BJ (cell line): ENCODE measurements at regions of chr1 and their contacts with region 1.

Region 1: GRCh38 chr1:26961826-26962225 is 1.6 kb upstream of the KDF1 start:
- DNase-seq: peak; percentile 72
- H3K4me3 ChIP-seq: no peak overlapping the region
- H3K27me3 ChIP-seq: peaks cover 14% of the 10 kb centered on the region
- CTCF ChIP-seq: no peak

Region 2: GRCh38 chr1:26838474-26839338 is 123.1 kb before region 1 on chr1:
- CTCF ChIA-PET with region 1: no interaction called
- POLR2A ChIA-PET with region 1: no interaction called
- DNase-seq: no peak
- H3K4me3 ChIP-seq: no peak overlapping the region
- H3K27me3 ChIP-seq: no peaks in the 10 kb centered on the region
- CTCF ChIP-seq: no peak

Region 3: GRCh38 chr1:26932531-26932930 is 29.3 kb before region 1 on chr1:
- CTCF ChIA-PET with region 1: no interaction called
- POLR2A ChIA-PET with region 1: no interaction called
- DNase-seq: no peak
- H3K4me3 ChIP-seq: no peak overlapping the region
- H3K27me3 ChIP-seq: no peaks in the 10 kb centered on the region
- CTCF ChIP-seq: no peak

Region 4: GRCh38 chr1:26976621-26977510 is 15.0 kb after region 1 on chr1:
- CTCF ChIA-PET with region 1: interaction called, 14 read pairs
- POLR2A ChIA-PET with region 1: interaction called, 3 read pairs
- DNase-seq: no peak
- H3K4me3 ChIP-seq: no peak overlapping the region
- H3K27me3 ChIP-seq: no peaks in the 10 kb centered on the region
- CTCF ChIP-seq: no peak

Region 5: DNA sequence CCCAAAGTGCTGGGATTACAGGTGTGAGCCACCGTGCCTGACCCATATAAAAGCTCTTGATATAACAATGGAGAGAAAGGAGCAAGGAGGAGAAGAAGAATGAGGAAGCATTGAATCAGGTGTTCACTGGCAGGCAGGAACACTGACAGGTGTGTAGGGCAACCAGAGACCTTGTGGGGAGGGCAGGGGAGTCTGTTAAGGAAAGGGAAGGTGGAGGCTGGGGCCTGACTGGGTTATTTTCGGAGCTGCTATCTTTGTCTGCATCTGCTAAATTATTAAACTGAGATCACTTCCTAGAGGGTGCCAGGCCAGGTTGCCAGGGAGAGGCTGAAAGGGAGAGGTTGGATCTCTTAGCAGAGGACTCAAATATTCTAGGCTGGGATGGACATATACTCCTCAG is 24.8 kb after region 1 on chr1:
- CTCF ChIA-PET with region 1: interaction called, 27 read pairs
- POLR2A ChIA-PET with region 1: no interaction called
- DNase-seq: no peak
- H3K4me3 ChIP-seq: no peak overlapping the region
- H3K27me3 ChIP-seq: 0 out of 2 replicates have a peak, but pooled peaks cover 2% of the 10 kb centered on the region
- CTCF ChIP-seq: no peak

Region 6: DNA sequence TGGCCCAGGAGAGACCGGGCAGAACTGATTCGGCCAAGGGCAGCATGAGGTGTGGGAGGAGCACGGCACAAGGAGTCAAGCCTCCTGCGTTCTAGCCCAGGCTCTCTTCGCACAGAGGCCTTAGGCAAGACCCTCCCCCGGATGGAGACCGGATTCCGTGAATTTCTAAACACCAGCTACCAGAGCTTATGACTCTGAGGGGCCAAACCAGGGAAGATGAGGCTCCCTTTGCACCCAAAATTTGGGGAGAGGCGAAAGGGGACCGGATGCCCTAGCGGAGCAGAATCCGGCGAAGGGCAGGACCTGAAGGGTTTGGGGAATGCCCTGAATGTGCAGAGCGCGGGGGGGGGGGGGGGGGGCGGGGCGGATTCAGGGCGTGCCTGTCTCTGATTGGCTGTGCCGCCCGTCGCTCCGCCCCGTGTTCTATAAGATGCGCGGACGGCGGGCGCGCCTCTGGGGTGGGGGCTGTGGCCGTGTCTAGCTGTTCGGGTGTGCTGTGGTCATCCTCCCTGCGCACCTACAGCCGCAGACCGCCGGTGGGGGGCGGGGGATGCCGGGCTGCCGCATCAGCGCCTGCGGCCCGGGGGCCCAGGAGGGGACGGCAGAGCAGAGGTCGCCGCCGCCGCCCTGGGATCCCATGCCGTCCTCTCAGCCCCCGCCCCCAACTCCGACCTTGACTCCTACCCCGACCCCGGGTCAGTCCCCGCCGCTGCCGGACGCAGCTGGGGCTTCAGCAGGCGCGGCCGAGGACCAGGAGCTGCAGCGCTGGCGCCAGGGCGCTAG is 31.6 kb after region 1 on chr1 and contains the start of gene TRNP1:
- CTCF ChIA-PET with region 1: interaction called, 109 read pairs
- POLR2A ChIA-PET with region 1: no interaction called
- DNase-seq: no peak
- H3K4me3 ChIP-seq: peak within 1 kb of the TSS; percentile 70
- H3K27me3 ChIP-seq: no peaks in the 10 kb centered on the region
- CTCF ChIP-seq: no peak
- polyA plus RNA-seq, gene TRNP1: 68.9 and 75.4 TPM in 2 replicates

Region 7: DNA sequence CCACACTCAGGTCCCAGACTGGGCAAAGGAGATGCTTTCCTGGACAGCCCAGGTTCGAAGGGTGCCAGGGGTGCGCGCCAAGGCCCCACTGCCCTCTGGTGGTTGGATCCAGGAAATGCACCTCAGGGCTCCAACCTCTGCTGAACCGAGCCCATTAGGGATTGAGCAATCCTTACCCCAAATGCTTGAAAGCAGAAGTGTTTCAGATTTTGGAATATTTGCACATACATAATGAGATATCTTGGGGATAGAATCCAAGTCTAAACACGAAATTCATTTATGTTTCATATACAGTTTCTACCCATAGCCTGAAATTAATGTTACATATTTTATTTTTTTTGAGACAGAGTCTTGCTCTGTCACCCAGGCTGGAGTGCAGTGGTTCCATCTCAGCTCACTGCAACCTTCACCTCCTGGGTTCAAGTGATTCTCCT is 135.7 kb after region 1 on chr1:
- CTCF ChIA-PET with region 1: interaction called, 42 read pairs
- POLR2A ChIA-PET with region 1: no interaction called
- DNase-seq: no peak
- H3K4me3 ChIP-seq: no peak overlapping the region
- H3K27me3 ChIP-seq: no peaks in the 10 kb centered on the region
- CTCF ChIP-seq: peak; percentile 96

Region 8: DNA sequence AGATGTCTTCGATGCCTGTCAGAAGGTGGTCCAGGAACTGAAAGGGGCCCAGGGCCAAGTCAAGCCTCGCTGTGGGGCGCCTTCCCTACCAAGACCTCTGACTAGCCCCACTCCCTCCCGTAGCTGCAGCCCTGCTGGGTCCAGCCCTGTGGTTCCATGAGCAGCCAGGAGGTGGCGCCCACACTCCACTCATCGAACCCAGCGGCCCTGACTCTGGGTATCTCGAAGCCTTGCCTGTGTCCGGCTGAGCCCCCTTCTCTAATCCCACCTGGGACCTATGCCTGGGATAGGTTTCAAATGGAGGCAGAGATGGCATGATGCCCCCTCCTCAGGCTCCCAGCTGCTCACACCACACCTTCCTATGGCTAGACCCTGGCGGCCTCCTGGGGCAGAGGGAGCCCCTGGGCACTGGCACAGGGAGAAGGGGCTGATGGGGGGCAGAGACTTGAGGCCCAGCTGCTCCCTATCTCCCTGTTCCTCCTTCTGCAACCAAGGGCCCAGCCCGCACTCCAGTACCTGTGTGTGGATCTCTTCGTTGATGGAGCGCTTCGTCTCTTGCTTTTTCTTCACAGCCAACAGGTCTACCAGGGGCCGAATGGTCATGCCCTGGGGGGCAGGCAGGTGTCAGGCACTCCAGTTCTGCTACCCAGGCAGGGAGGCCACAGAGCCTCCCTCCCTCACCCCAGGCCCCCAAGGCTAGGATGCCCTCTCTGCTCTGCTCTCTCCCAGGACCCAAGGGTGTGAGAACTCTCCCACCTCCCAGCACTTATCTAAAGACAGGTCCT is 141.1 kb after region 1 on chr1:
- CTCF ChIA-PET with region 1: interaction called, 42 read pairs
- POLR2A ChIA-PET with region 1: no interaction called
- DNase-seq: no peak
- H3K4me3 ChIP-seq: no peak overlapping the region
- H3K27me3 ChIP-seq: no peaks in the 10 kb centered on the region
- CTCF ChIP-seq: peak; percentile 94

Region 9: GRCh38 chr1:27122652-27123051 is 160.8 kb after region 1 on chr1:
- CTCF ChIA-PET with region 1: no interaction called
- POLR2A ChIA-PET with region 1: no interaction called
- DNase-seq: no peak
- H3K4me3 ChIP-seq: no peak overlapping the region
- H3K27me3 ChIP-seq: no peaks in the 10 kb centered on the region
- CTCF ChIP-seq: no peak